ENCODE measurements at regions of chr13 and their contacts with region 1.

Region 1: GRCh38 chr13:99057310-99057975 is 79.6 kb upstream of the DOCK9 start:
- DNase-seq: no peak
- ATAC-seq: no peak
- H3K4me3 ChIP-seq: no peak overlapping the region
- H3K4me3 Mint-ChIP-seq: no peak overlapping the region
- H3K27ac ChIP-seq: no peak overlapping the region
- H3K27ac Mint-ChIP-seq: peak overlapping the region; percentile 55
- H3K4me1 ChIP-seq: peaks cover 62% of the 10 kb centered on the region
- H3K4me1 Mint-ChIP-seq: peaks cover 93% of the 10 kb centered on the region
- H3K27me3 ChIP-seq: no peaks in the 10 kb centered on the region
- H3K27me3 Mint-ChIP-seq: no peaks in the 10 kb centered on the region
- CTCF ChIP-seq: no peak

Region 2: DNA sequence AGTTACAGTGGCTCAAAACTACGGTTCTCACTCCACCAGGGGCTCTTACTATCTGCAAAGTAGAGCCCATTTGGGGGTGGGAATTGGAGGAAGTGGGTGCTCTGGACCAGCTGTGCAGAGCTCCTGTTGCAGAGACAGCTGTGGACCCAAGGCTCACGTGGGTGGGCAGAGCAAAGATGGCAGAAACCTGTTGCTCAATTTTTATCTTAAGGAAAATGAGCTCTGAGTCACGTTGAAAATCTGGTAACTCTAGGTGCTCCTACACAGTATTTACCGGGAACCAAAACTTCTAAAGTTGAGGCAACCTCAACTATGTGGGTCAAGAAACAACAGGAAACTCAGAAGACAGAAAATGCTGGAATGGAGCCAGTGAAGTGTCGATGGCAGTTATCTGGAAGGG is 274.8 kb before region 1 on chr13:
- CTCF ChIA-PET with region 1: no interaction called
- POLR2A ChIA-PET with region 1: no interaction called
- intact Hi-C with region 1: no loop called
- DNase-seq: no peak
- ATAC-seq: no peak
- H3K4me3 ChIP-seq: no peak overlapping the region
- H3K4me3 Mint-ChIP-seq: no peak overlapping the region
- H3K27ac ChIP-seq: no peak overlapping the region
- H3K27ac Mint-ChIP-seq: no peak overlapping the region
- H3K4me1 ChIP-seq: no peaks in the 10 kb centered on the region
- H3K4me1 Mint-ChIP-seq: no peaks in the 10 kb centered on the region
- H3K27me3 ChIP-seq: peaks cover 0 to 9% of the 10 kb centered on the region in 2 experiments
- H3K27me3 Mint-ChIP-seq: peaks cover 32% of the 10 kb centered on the region
- CTCF ChIP-seq: no peak

Region 3: DNA sequence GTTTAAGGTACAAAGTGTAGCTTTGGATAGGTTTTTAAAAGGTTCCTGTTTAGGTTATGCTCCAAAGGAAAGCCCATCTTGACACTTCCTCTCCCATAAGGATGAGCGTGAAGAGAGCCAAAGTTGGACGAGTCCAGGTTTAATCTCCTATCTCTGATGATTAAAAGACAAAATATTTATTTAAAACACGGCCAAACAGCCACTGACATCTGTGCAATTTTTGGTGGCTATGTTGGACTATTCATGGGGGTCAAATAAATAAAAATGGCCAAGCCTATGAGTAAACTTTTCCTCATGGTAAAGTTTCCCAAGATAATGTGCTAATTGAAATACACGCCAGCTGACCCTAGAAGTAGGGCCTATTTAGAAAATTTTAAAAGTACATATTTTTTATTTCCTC is 10.6 kb before region 1 on chr13:
- CTCF ChIA-PET with region 1: no interaction called
- POLR2A ChIA-PET with region 1: interaction called, 12 read pairs
- intact Hi-C with region 1: no loop called
- DNase-seq: no peak
- ATAC-seq: no peak
- H3K4me3 ChIP-seq: peak overlapping the region; percentile 34
- H3K4me3 Mint-ChIP-seq: peak overlapping the region; percentile 75
- H3K27ac ChIP-seq: peak overlapping the region; percentile 75 to 78
- H3K27ac Mint-ChIP-seq: peak overlapping the region; percentile 95
- H3K4me1 ChIP-seq: peaks cover 93% of the 10 kb centered on the region
- H3K4me1 Mint-ChIP-seq: peaks cover 95% of the 10 kb centered on the region
- H3K27me3 ChIP-seq: no peaks in the 10 kb centered on the region
- H3K27me3 Mint-ChIP-seq: no peaks in the 10 kb centered on the region
- CTCF ChIP-seq: no peak